ENCODE measurements at regions of chr11 and their contacts with region 1.

Region 1: GRCh38 chr11:13249996-13250395 is 27.6 kb upstream of the BMAL1 start:
- DNase-seq: no peak
- ATAC-seq: no peak
- H3K4me3 Mint-ChIP-seq: no peak overlapping the region
- H3K27ac Mint-ChIP-seq: no peak overlapping the region
- H3K4me1 Mint-ChIP-seq: no peaks in the 10 kb centered on the region
- H3K27me3 Mint-ChIP-seq: peaks cover 20% of the 10 kb centered on the region

Region 2: DNA sequence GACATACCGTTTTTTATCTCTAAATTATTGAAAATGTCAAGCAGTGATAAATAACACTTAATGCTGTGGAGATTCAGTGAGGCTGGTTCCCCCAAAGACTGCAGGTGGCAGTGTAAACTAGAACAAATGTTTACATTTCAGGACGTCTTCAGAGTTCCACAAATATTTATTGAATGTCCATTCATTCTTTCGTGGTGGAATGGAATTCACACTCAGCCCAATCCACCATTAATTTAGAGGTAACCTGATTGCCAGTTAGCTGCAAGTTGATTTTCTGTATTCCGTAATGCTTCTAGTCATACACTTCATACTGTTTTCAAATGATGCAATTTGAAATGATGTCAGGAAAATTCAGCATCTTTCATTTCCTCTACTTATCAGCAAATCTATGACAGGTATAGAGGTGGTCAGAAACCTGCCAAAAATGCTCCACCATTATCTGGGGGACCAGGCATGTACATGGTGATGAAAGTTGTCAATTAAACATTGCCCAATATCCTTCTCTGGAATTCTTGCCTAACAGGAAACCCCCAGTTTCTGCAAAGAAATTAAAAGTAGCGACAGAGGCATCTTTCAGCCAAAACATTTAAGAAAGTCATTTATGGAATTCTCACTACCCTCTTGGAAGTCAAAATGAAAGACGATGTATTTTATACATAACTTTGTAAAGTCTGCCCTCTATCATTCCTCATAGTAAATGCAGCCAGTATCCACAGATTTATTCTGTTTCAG is 66.7 kb before region 1 on chr11:
- CTCF ChIA-PET with region 1: no interaction called
- POLR2A ChIA-PET with region 1: no interaction called
- DNase-seq: peak; percentile 37
- ATAC-seq: no peak
- H3K4me3 Mint-ChIP-seq: peak overlapping the region; percentile 17
- H3K27ac Mint-ChIP-seq: no peak overlapping the region
- H3K4me1 Mint-ChIP-seq: peaks cover 5% of the 10 kb centered on the region
- H3K27me3 Mint-ChIP-seq: peaks cover 14% of the 10 kb centered on the region

Region 3: GRCh38 chr11:13343931-13344717 is 94.1 kb after region 1 on chr11:
- CTCF ChIA-PET with region 1: interaction called, 25 read pairs
- POLR2A ChIA-PET with region 1: no interaction called
- DNase-seq: peak; percentile 86
- ATAC-seq: peak; percentile 68
- H3K4me3 Mint-ChIP-seq: no peak overlapping the region
- H3K27ac Mint-ChIP-seq: no peak overlapping the region
- H3K4me1 Mint-ChIP-seq: peaks cover 42% of the 10 kb centered on the region
- H3K27me3 Mint-ChIP-seq: no peaks in the 10 kb centered on the region